ENCODE measurements at regions of chr12 and their contacts with region 1.

Region 1: GRCh38 chr12:3073438-3074250 is 3.5 kb upstream of the TSPAN9 start:
- DNase-seq: peak; percentile 90
- H3K4me3 ChIP-seq: no peak overlapping the region; a peak in 1 of 4 replicates
- H3K27ac ChIP-seq: no peak overlapping the region
- H3K4me1 ChIP-seq: peaks cover 0 to 14% of the 10 kb centered on the region in 2 experiments; a peak in 2 of 4 replicates
- H3K27me3 ChIP-seq: no peaks in the 10 kb centered on the region
- CTCF ChIP-seq: peak; percentile 99
- EP300 ChIP-seq: no peak
- RAD21 ChIP-seq: peak; percentile 94

Region 2: GRCh38 chr12:2360629-2361168 is 712.9 kb before region 1 on chr12:
- CTCF ChIA-PET with region 1: no interaction called
- POLR2A ChIA-PET with region 1: no interaction called
- DNase-seq: no peak
- H3K4me3 ChIP-seq: no peak overlapping the region
- H3K27ac ChIP-seq: no peak overlapping the region
- H3K4me1 ChIP-seq: peaks cover 13 to 15% of the 10 kb centered on the region in 2 experiments; a peak in 2 of 4 replicates
- H3K27me3 ChIP-seq: no peaks in the 10 kb centered on the region
- CTCF ChIP-seq: peak; percentile 41
- EP300 ChIP-seq: no peak
- RAD21 ChIP-seq: no peak

Region 3: GRCh38 chr12:2912216-2912575 is 161.4 kb before region 1 on chr12:
- CTCF ChIA-PET with region 1: no interaction called
- POLR2A ChIA-PET with region 1: no interaction called
- DNase-seq: no peak
- H3K4me3 ChIP-seq: no peak overlapping the region
- H3K27ac ChIP-seq: peak overlapping the region in 1 of 2 experiments; percentile 11; a peak in 1 of 4 replicates
- H3K4me1 ChIP-seq: no peaks in the 10 kb centered on the region; a peak in 1 of 4 replicates
- H3K27me3 ChIP-seq: no peaks in the 10 kb centered on the region
- CTCF ChIP-seq: no peak
- EP300 ChIP-seq: no peak
- RAD21 ChIP-seq: no peak

Region 4: DNA sequence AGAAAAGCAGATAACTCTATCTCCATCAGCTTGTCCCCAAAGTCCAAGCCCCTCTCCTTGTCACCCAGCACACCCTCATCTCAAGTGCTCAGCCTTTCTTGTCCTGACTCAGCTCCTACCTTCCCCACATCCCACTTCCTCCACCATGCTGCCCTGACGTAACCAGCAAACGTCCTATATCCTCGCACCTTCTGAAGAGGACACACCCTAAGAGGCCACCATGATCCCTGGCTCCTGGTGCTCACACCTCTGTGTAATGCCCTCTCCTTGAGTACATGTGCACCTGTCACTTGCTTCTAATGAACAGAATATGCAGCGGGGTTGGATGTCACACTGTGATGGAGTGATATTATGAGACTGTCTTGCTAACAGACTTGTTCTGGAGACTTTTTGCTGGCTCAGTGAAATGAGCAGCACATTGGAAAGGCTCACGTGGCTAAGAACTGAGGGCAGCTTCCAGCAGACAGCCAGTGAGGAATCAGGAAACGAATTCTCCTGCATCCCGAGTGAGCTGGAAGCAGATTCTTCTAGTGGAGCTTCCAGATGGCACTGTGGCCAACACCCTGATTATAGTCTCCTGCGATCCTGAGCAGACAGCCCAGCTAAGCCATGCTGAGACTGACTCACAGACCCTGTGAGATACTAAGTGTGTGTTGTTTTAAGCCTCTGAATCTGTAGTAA is 12.7 kb before region 1 on chr12:
- CTCF ChIA-PET with region 1: interaction called, 20 read pairs
- POLR2A ChIA-PET with region 1: no interaction called
- DNase-seq: no peak
- H3K4me3 ChIP-seq: no peak overlapping the region
- H3K27ac ChIP-seq: no peak overlapping the region
- H3K4me1 ChIP-seq: no peaks in the 10 kb centered on the region
- H3K27me3 ChIP-seq: no peaks in the 10 kb centered on the region
- CTCF ChIP-seq: no peak
- EP300 ChIP-seq: no peak
- RAD21 ChIP-seq: no peak

Region 5: GRCh38 chr12:3097186-3097804 is 23.7 kb after region 1 on chr12:
- CTCF ChIA-PET with region 1: interaction called, 41 read pairs
- POLR2A ChIA-PET with region 1: no interaction called
- DNase-seq: peak; percentile 86
- H3K4me3 ChIP-seq: no peak overlapping the region
- H3K27ac ChIP-seq: peak overlapping the region; percentile 71 to 85; a peak in 3 of 4 replicates
- H3K4me1 ChIP-seq: peaks cover 9 to 18% of the 10 kb centered on the region in 2 experiments
- H3K27me3 ChIP-seq: no peaks in the 10 kb centered on the region
- CTCF ChIP-seq: no peak
- EP300 ChIP-seq: peak in 1 of 2 experiments; percentile 22; a peak in 1 of 4 replicates
- RAD21 ChIP-seq: no peak

Region 6: GRCh38 chr12:3122835-3123678 is 49.4 kb after region 1 on chr12:
- CTCF ChIA-PET with region 1: interaction called, 20 read pairs
- POLR2A ChIA-PET with region 1: interaction called, 5 read pairs
- DNase-seq: peak; percentile 74
- H3K4me3 ChIP-seq: no peak overlapping the region
- H3K27ac ChIP-seq: peak overlapping the region; percentile 80 to 84
- H3K4me1 ChIP-seq: peaks cover 18 to 26% of the 10 kb centered on the region in 2 experiments
- H3K27me3 ChIP-seq: no peaks in the 10 kb centered on the region
- CTCF ChIP-seq: no peak
- EP300 ChIP-seq: peak in 1 of 2 experiments; percentile 7; a peak in 2 of 4 replicates
- RAD21 ChIP-seq: no peak

Region 7: DNA sequence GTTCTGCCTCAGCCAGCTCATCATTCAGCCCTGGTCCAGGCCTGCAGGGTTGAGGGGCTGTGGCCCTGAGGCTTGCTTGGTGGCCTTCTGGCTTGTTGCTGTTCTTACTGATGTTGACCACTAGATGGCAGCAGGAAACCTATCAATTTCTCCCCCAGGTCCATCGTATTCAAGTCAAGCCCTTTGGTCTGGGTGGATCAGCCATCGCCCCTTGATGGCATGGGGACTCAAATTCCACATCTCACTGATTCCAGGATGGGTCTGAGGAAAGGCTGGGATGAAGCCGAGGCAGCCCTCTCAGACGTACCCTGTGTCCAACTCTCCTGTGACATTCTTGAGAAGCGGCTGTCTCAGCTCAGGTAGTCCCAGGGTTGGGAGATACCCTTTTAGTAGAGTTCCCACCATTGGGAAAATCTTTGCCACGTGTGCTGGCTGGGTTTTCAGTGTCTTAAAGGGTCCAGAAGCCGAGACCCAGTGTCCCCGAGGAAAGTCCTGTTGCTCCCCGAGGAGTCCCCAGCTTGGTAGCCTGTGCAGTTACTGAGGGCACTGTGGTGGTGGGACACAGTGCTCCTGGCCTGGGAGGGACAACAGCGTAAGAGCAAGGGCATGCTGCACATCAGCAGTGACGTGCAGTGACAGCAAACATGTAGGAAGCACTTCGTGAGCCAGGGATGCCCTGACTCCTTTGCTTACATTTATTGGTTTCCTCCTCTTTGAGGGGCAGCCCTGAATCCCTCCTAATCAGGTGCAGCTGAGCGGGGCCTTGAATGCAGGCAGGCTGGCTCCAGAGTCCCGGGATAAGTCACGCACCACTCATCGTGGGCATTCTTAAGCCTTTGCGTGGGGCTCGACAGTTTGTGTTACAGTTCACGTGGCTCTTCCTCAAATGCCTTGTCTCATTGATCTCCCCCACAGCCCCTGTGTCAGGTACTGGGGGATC is 62.1 kb after region 1 on chr12:
- CTCF ChIA-PET with region 1: interaction called, 28 read pairs
- POLR2A ChIA-PET with region 1: interaction called, 3 read pairs
- DNase-seq: peak; percentile 90
- H3K4me3 ChIP-seq: no peak overlapping the region; a peak in 1 of 4 replicates
- H3K27ac ChIP-seq: no peak overlapping the region
- H3K4me1 ChIP-seq: peaks cover 13 to 22% of the 10 kb centered on the region in 2 experiments; a peak in 3 of 4 replicates
- H3K27me3 ChIP-seq: no peaks in the 10 kb centered on the region
- CTCF ChIP-seq: peak; percentile 78
- EP300 ChIP-seq: no peak
- RAD21 ChIP-seq: peak; percentile 96

Measured in SK-N-SH (cell line).